HEK293 (cell line): ENCODE measurements at regions of chr20 and their contacts with region 1.

Region 1: GRCh38 chr20:34111702-34112599 is at the start of gene EIF2S2:
- H3K4me3 ChIP-seq: peak within 1 kb of the TSS; percentile 85
- H3K27ac ChIP-seq: peak within 1 kb of the TSS; percentile 81
- H3K4me1 ChIP-seq: peaks cover 3% of the 10 kb centered on the region; the same call in 1 of the 2 replicates
- CTCF ChIP-seq: peak; percentile 70; the same call in 1 of the 2 replicates

Region 2: GRCh38 chr20:34058831-34059230 is 53.1 kb before region 1 on chr20:
- CTCF ChIA-PET with region 1: no interaction called
- POLR2A ChIA-PET with region 1: no interaction called
- H3K4me3 ChIP-seq: no peak overlapping the region
- H3K27ac ChIP-seq: no peak overlapping the region
- H3K4me1 ChIP-seq: no peaks in the 10 kb centered on the region
- CTCF ChIP-seq: no peak

Region 3: GRCh38 chr20:34122274-34122980 is 10.5 kb after region 1 on chr20:
- CTCF ChIA-PET with region 1: interaction called, 5 read pairs
- POLR2A ChIA-PET with region 1: interaction called, 11 read pairs
- H3K4me3 ChIP-seq: no peak overlapping the region
- H3K27ac ChIP-seq: no peak overlapping the region
- H3K4me1 ChIP-seq: no peaks in the 10 kb centered on the region
- CTCF ChIP-seq: no peak